Activated B cell treated with CpG ODN at 0.5 μM for 24 hours (primary cell): ENCODE measurements at regions of chr14 and their contacts with region 1.

Region 1: GRCh38 chr14:63852817-63853731 is at the start of gene SYNE2:
- DNase-seq: peak; percentile 83
- ATAC-seq: peak; percentile 91
- H3K4me3 Mint-ChIP-seq: peak within 1 kb of the TSS; percentile 92
- H3K27ac Mint-ChIP-seq: peak within 1 kb of the TSS; percentile 87
- H3K4me1 Mint-ChIP-seq: peaks cover 24% of the 10 kb centered on the region
- H3K27me3 Mint-ChIP-seq: no peaks in the 10 kb centered on the region
- CTCF ChIP-seq: no peak
- total RNA-seq, gene SYNE2: 35.0 and 40.1 TPM in 2 replicates

Region 2: GRCh38 chr14:63727774-63728728 is 125.0 kb before region 1 on chr14 and contains the start of gene SGPP1:
- CTCF ChIA-PET with region 1: no interaction called
- POLR2A ChIA-PET with region 1: no interaction called
- intact Hi-C with region 1: loop called (anchors 2 kb)
- DNase-seq: peak; percentile 82
- ATAC-seq: peak; percentile 91
- H3K4me3 Mint-ChIP-seq: peak within 1 kb of the TSS; percentile 99
- H3K27ac Mint-ChIP-seq: peak within 1 kb of the TSS; percentile 96
- H3K4me1 Mint-ChIP-seq: peaks cover 42% of the 10 kb centered on the region
- H3K27me3 Mint-ChIP-seq: no peaks in the 10 kb centered on the region
- CTCF ChIP-seq: no peak
- total RNA-seq, gene SGPP1: 20.9 and 21.2 TPM in 2 replicates

Region 3: DNA sequence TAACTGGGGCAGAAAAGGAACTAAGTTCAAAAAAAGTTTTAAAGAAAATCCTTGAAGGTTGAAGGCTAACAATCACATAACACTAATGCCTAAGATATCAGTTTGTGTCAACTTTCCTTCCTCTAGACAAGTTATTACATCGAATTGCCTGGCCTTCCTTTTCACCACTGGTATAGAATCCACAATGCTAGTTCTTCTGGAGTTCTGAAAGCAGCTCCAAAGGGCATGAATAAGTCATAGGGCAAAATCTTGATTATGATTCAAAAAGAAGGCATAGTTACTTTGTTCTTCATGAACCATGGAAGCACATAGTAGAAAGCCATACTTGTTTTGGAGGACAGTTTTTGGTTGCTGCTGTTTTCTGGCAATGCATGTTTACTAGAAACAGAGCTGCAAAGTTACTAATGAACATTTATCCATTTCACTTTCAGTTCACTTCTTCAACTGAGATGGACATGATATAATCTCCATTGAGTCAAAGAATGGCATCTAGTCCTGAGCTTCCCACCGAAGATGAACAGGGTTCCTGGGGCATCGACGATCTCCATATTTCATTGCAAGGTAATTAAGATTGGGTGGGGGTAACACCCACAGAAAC is 55.7 kb after region 1 on chr14:
- CTCF ChIA-PET with region 1: no interaction called
- POLR2A ChIA-PET with region 1: no interaction called
- intact Hi-C with region 1: loop called (anchors 5 kb)
- DNase-seq: no peak
- ATAC-seq: no peak
- H3K4me3 Mint-ChIP-seq: no peak overlapping the region
- H3K27ac Mint-ChIP-seq: no peak overlapping the region
- H3K4me1 Mint-ChIP-seq: peaks cover 9% of the 10 kb centered on the region
- H3K27me3 Mint-ChIP-seq: no peaks in the 10 kb centered on the region
- CTCF ChIP-seq: no peak

Region 4: GRCh38 chr14:64232095-64232838 is 379.2 kb after region 1 on chr14:
- CTCF ChIA-PET with region 1: no interaction called
- POLR2A ChIA-PET with region 1: no interaction called
- intact Hi-C with region 1: loop called (anchors 2 kb)
- DNase-seq: no peak
- ATAC-seq: peak; percentile 11
- H3K4me3 Mint-ChIP-seq: peak overlapping the region; percentile 53
- H3K27ac Mint-ChIP-seq: peak overlapping the region; percentile 97
- H3K4me1 Mint-ChIP-seq: peaks cover 61% of the 10 kb centered on the region
- H3K27me3 Mint-ChIP-seq: no peaks in the 10 kb centered on the region
- CTCF ChIP-seq: no peak

Region 5: DNA sequence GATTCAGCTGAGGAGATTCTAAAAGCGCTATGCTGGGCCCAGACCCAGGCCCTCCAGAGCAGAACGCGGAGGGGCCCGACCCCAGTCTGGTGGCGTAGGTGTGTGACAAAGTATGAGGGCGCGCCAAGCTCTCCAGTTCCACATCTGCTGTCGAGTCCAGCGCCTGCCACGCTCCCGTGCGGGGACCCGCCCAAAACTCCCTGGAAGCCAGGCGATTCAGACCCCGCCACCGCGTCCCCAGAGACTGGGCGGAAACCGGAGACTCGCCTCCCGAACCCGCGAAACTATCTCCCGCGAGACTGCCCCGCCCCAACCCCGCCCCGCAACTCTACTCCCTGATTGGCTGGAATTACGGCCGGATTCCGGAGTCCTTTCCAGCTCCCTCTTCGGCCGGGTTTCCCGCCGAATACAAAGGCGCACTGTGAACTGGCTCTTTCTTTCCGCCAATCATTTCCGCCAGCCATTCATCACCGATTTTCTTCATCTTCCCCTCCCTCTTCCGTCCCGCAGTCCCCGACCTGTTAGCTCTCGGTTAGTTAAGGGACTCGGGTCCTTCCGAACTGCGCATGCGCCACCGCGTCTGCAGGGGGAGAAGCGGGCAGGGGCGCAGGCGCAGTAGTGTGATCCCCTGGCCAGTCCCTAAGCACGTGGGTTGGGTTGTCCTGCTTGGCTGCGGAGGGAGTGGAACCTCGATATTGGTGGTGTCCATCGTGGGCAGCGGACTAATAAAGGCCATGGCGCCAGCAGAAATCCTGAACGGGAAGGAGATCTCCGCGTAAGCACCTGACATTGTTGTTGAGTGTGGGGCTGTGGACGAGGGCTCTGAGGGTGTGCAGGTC is 534.8 kb after region 1 on chr14 and contains the start of gene MTHFD1:
- CTCF ChIA-PET with region 1: no interaction called
- POLR2A ChIA-PET with region 1: no interaction called
- intact Hi-C with region 1: loop called (anchors 5 kb)
- DNase-seq: peak; percentile 93
- ATAC-seq: peak; percentile 79
- H3K4me3 Mint-ChIP-seq: peak within 1 kb of the TSS; percentile 94
- H3K27ac Mint-ChIP-seq: peak within 1 kb of the TSS; percentile 94
- H3K4me1 Mint-ChIP-seq: peaks cover 52% of the 10 kb centered on the region
- H3K27me3 Mint-ChIP-seq: no peaks in the 10 kb centered on the region
- CTCF ChIP-seq: no peak
- total RNA-seq, gene MTHFD1: 91.4 and 98.4 TPM in 2 replicates